Activated CD4-positive, alpha-beta T cell treated with anti-CD3 and anti-CD28 coated beads for 36 hours (primary cell): ENCODE measurements at regions of chr12 and their contacts with region 1.

Region 1: GRCh38 chr12:46459861-46460545 is 87.4 kb upstream of the SLC38A2 start:
- DNase-seq: peak; percentile 17
- ATAC-seq: no peak
- H3K4me3 Mint-ChIP-seq: peak overlapping the region; percentile 46
- H3K27ac Mint-ChIP-seq: peak overlapping the region; percentile 88
- H3K4me1 Mint-ChIP-seq: peaks cover 56% of the 10 kb centered on the region
- H3K27me3 Mint-ChIP-seq: no peaks in the 10 kb centered on the region

Region 2: DNA sequence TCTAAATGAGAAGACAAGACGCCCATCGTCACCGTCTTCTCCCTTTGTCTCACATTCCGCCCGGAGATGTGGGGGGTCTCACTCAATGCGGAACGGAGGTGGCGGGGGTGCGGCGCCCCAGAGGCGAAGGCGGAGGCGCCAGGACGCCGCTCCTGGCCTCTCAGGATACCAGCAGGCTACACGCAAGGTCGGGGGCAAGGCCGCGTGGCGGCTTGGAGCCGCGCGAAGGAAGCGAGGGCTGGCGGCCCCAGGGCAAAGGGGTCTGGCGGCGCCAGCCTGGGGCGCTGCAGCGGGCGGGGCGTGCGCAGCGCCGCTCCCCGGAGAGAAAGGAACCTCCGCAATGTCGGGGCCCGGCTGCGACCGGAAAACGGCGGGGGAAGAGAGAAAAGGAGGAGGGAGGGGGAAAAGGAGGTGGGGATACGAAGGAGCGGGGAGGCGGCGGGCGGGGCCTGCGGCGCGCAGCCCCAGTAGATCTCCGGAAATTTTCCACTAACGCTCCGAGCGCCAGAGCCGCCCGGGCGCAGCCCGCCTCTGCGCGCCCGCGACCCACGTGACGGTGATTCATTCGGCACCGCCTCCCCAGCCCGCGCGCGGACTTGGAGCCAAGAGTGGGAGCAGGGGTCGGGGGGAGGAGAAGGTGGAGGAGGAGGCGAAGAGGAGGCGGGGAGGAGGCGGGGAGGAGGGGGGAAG is 76.9 kb before region 1 on chr12:
- CTCF ChIA-PET with region 1: no interaction called
- POLR2A ChIA-PET with region 1: interaction called, 3 read pairs
- intact Hi-C with region 1: loop called in 1 of 2 experiments (anchors 2 kb)
- DNase-seq: peak; percentile 97
- ATAC-seq: peak; percentile 83
- H3K4me3 Mint-ChIP-seq: peak overlapping the region; percentile 74
- H3K27ac Mint-ChIP-seq: peak overlapping the region; percentile 89
- H3K4me1 Mint-ChIP-seq: peaks cover 39% of the 10 kb centered on the region
- H3K27me3 Mint-ChIP-seq: no peaks in the 10 kb centered on the region

Region 3: GRCh38 chr12:46430340-46430948 is 29.6 kb before region 1 on chr12:
- CTCF ChIA-PET with region 1: interaction called, 3 read pairs
- POLR2A ChIA-PET with region 1: no interaction called
- intact Hi-C with region 1: loop called (anchors 2 kb)
- DNase-seq: peak; percentile 22
- ATAC-seq: peak; percentile 92
- H3K4me3 Mint-ChIP-seq: peak overlapping the region; percentile 38
- H3K27ac Mint-ChIP-seq: peak overlapping the region; percentile 92
- H3K4me1 Mint-ChIP-seq: peaks cover 24% of the 10 kb centered on the region
- H3K27me3 Mint-ChIP-seq: no peaks in the 10 kb centered on the region

Region 4: GRCh38 chr12:46523863-46524770 is 64.1 kb after region 1 on chr12:
- CTCF ChIA-PET with region 1: interaction called, 4 read pairs
- POLR2A ChIA-PET with region 1: no interaction called
- intact Hi-C with region 1: loop called in 1 of 2 experiments (anchors 2 kb)
- DNase-seq: peak; percentile 66
- ATAC-seq: peak; percentile 89
- H3K4me3 Mint-ChIP-seq: peak overlapping the region; percentile 57
- H3K27ac Mint-ChIP-seq: peak overlapping the region; percentile 91
- H3K4me1 Mint-ChIP-seq: peaks cover 43% of the 10 kb centered on the region
- H3K27me3 Mint-ChIP-seq: no peaks in the 10 kb centered on the region

Region 5: DNA sequence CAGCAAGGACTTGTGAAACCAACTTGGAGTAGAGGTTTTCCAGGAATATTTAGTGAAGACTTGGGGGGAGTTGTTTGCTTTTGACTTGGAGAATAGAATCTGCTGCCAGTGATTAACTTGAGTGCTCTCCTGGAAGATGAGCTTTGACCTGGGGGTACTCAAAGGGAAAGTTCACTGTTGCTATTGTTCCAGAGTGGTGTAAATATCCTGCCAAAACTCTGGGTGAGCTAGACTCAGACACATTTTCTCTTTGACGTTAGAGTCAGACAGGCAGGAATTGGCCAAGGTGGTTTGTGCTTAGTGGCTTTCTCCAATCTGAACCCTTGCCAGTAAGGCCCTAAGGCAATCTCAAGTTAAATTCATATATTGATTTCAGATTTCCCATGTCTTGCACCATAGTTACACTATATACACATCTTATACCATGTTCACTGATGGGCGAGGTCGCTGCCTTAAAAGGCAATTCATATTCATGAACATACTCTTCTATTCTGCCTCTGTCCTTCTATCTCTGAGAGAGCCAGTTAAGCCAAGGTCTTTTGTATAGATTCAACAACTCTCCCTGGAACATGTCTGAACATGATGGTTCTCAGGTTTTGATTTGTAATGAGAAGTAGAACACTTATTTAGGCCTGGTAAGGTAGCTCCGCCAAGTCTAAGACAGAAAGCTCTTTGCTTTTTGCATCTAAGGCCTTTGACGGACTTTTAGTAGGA is 117.2 kb after region 1 on chr12:
- CTCF ChIA-PET with region 1: no interaction called
- POLR2A ChIA-PET with region 1: no interaction called
- intact Hi-C with region 1: no loop called
- DNase-seq: no peak
- ATAC-seq: no peak
- H3K4me3 Mint-ChIP-seq: no peak overlapping the region
- H3K27ac Mint-ChIP-seq: no peak overlapping the region
- H3K4me1 Mint-ChIP-seq: no peaks in the 10 kb centered on the region
- H3K27me3 Mint-ChIP-seq: no peaks in the 10 kb centered on the region

Region 6: DNA sequence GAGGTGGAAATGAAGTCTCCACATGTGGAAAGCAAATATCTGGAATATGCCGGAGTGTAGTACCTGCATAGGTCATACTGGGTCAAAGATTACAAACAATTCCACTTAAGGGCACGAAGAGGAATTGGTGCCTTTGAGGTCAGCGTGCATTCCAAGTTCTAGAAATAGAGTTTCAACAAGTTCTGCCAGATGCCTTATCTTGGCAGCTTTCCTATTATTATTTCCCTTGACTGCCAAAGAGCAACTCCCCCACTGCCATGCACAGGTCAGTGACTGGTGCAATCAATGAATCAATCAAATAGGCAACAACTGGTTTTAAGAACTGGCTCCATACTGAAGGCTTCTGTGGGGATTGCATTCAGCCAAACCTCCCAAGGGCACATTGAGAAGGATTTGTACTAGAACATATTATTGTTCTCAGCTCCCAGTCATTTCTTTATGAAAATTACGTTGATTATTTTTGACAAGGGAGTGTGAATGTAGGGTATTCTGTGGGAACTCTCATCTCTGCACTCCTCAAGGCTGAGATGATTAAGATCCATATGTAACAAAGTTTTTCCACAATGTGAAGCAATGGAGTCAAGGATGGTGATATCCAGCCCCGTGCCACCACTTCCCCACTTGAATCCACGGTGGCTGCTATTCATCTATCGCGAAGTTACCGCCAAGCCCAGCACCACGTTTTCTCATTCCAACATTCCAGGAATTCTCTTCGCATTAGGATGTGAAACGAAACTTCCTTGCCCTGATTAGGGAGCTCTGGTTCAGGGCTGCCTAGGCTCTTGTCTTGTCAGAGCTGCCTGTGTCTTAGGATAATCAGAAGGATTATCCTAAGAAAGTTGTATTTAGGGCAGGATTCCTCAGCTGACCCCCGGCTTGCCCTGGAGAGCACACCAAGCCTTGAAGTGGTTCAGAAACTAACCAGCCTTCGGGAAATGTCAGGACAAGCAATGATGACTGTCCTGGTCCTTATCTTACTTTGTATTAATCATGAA is 504.3 kb after region 1 on chr12:
- CTCF ChIA-PET with region 1: no interaction called
- POLR2A ChIA-PET with region 1: no interaction called
- intact Hi-C with region 1: no loop called
- DNase-seq: no peak
- ATAC-seq: no peak
- H3K4me3 Mint-ChIP-seq: no peak overlapping the region
- H3K27ac Mint-ChIP-seq: no peak overlapping the region
- H3K4me1 Mint-ChIP-seq: no peaks in the 10 kb centered on the region
- H3K27me3 Mint-ChIP-seq: peaks cover 8% of the 10 kb centered on the region